PC-9 (cell line): ENCODE measurements at regions of chr11 and their contacts with region 1.

Region 1: DNA sequence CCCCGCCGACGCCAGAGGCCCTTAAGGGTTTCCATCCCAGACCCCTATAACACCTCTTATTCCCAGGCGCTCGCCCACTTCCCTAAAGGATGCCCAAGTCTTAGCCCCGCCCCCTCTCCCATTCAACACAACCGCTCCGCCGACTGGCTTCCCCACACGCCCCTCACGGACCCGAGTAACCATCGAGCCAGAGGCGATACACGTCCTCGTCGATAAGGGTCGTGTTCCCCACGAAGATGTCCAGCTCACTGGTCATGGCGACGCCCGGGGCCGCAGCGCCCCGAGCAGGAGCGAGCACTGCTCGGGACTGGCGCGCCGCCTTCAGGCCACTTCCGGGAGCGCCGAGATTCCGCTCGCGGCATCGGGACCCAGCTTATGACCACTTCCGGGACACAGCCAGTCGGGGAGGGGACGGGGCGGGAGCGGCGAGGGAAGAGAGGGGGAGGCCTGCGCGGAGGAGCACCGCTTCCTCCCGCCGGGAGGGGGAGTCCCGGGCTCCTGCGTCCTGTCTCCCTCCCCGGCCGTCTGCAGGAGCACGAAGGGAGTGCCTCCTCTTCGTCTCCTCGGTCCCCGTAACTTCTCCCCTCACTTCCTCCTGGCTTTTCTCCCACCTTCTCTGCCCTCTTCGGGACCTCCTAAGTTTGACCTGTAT is at the start of gene FIBP:
- DNase-seq: peak; percentile 92 to 97
- H3K4me3 ChIP-seq: peak within 1 kb of the TSS; percentile 80
- H3K27ac ChIP-seq: peak within 1 kb of the TSS; percentile 51
- H3K4me1 ChIP-seq: peaks cover 28% of the 10 kb centered on the region
- H3K27me3 ChIP-seq: no peaks in the 10 kb centered on the region
- CTCF ChIP-seq: peak; percentile 90
- total RNA-seq, gene FIBP: 105 and 141 TPM in 2 replicates

Region 2: GRCh38 chr11:65111744-65112414 is 776.4 kb before region 1 on chr11 and contains the start of gene TM7SF2:
- CTCF ChIA-PET with region 1: no interaction called
- POLR2A ChIA-PET with region 1: interaction called, 14 read pairs
- intact Hi-C with region 1: no loop called
- DNase-seq: peak; percentile 92 to 97
- H3K4me3 ChIP-seq: peak within 1 kb of the TSS; percentile 78
- H3K27ac ChIP-seq: no peak within 1 kb of the TSS
- H3K4me1 ChIP-seq: peaks cover 40% of the 10 kb centered on the region
- H3K27me3 ChIP-seq: no peaks in the 10 kb centered on the region
- CTCF ChIP-seq: no peak
- total RNA-seq, gene TM7SF2: 49.5 and 72.3 TPM in 2 replicates

Region 3: GRCh38 chr11:65711785-65712632 is 176.3 kb before region 1 on chr11 and contains the start of gene KAT5:
- CTCF ChIA-PET with region 1: interaction called, 11 read pairs
- POLR2A ChIA-PET with region 1: interaction called, 10 read pairs
- intact Hi-C with region 1: loop called (anchors 1 kb)
- DNase-seq: peak; percentile 96 to 99
- H3K4me3 ChIP-seq: peak within 1 kb of the TSS; percentile 86
- H3K27ac ChIP-seq: peak within 1 kb of the TSS; percentile 91
- H3K4me1 ChIP-seq: peaks cover 13% of the 10 kb centered on the region
- H3K27me3 ChIP-seq: no peaks in the 10 kb centered on the region
- CTCF ChIP-seq: peak; percentile 97
- total RNA-seq, gene KAT5: 49.6 and 57.1 TPM in 2 replicates

Region 4: GRCh38 chr11:65822776-65823528 is 65.3 kb before region 1 on chr11:
- CTCF ChIA-PET with region 1: no interaction called
- POLR2A ChIA-PET with region 1: no interaction called
- intact Hi-C with region 1: no loop called
- DNase-seq: no peak
- H3K4me3 ChIP-seq: no peak overlapping the region
- H3K27ac ChIP-seq: no peak overlapping the region
- H3K4me1 ChIP-seq: no peaks in the 10 kb centered on the region
- H3K27me3 ChIP-seq: no peaks in the 10 kb centered on the region
- CTCF ChIP-seq: no peak

Region 5: DNA sequence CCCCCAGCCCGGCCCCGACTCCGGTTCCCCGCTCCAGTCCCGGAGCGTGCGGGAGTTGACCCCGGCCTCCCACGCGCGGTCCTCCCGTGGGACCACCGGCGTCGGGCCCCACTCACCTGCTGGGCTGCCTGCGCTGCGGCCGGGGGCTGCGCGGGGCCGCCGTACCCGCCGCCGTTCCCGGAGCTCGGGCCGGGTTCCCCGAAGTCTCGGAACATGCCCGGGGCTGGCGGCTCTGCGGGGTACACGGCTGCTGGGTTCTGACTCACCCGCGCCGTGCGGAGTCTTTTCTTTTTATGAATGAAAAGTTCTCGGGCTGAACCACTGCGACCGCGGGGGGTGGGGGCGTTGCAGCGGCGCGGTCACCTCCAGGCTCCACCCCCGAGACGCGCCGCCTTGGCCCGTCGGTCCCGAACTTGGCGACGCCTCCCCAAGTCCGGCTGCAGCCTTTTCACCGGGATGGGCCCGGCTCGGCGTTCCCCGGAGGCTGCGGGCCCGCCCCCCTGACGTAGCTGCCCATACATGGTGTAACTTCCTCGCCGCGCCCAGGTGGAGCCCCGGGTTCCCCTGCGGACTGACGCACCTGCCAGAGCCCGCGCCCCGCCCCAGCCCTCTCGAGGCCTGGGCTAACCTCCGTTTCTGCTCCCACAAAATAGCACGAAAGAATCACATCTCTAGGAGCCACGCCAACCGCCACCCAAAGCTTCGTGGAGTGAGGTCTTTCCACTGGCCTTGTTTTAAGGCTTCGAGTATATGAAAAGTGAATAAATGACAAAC is 12.0 kb after region 1 on chr11 and contains the start of gene FOSL1:
- CTCF ChIA-PET with region 1: interaction called, 15 read pairs
- POLR2A ChIA-PET with region 1: interaction called, 8 read pairs
- intact Hi-C with region 1: no loop called
- DNase-seq: peak; percentile 97 to 100
- H3K4me3 ChIP-seq: peak within 1 kb of the TSS; percentile 96
- H3K27ac ChIP-seq: peak within 1 kb of the TSS; percentile 95
- H3K4me1 ChIP-seq: peaks cover 71% of the 10 kb centered on the region
- H3K27me3 ChIP-seq: no peaks in the 10 kb centered on the region
- CTCF ChIP-seq: no peak
- total RNA-seq, gene FOSL1: 58.8 and 69.9 TPM in 2 replicates

Region 6: DNA sequence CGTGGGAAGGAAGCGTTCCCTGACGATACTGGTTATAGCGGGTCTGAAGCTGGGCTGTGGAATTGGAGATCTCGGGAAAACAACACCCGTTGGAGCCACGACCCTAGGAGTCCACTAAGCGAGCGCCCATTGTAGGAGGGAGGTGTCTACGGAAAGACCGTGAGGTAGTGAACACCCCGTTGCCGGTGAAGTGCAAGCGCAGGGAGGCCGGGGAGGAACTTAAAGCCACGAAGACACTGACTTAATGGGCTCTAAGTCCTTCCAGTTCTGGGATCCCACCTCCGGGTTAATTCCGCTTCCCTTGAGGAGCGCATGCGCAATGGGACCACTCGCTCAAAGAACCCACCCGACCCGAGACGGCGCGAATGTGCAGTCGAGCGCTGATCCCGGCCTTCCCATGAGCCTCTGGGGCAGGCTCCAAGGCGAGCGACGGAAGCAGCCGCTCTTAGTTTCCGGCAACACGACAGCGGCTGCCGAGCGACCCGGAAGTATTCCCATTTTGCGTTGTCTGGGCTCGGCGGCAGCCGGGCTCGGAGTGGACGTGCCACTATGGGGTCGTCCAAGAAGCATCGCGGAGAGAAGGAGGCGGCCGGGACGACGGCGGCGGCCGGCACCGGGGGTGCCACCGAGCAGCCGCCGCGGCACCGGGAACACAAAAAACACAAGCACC is 73.1 kb after region 1 on chr11 and contains the start of gene SART1:
- CTCF ChIA-PET with region 1: interaction called, 11 read pairs
- POLR2A ChIA-PET with region 1: interaction called, 3 read pairs
- intact Hi-C with region 1: loop called (anchors 1 kb)
- DNase-seq: peak; percentile 94 to 97
- H3K4me3 ChIP-seq: peak within 1 kb of the TSS; percentile 71
- H3K27ac ChIP-seq: peak within 1 kb of the TSS; percentile 63
- H3K4me1 ChIP-seq: peaks cover 13% of the 10 kb centered on the region
- H3K27me3 ChIP-seq: no peaks in the 10 kb centered on the region
- CTCF ChIP-seq: no peak
- total RNA-seq, gene SART1: 74.6 and 78.8 TPM in 2 replicates

Region 7: DNA sequence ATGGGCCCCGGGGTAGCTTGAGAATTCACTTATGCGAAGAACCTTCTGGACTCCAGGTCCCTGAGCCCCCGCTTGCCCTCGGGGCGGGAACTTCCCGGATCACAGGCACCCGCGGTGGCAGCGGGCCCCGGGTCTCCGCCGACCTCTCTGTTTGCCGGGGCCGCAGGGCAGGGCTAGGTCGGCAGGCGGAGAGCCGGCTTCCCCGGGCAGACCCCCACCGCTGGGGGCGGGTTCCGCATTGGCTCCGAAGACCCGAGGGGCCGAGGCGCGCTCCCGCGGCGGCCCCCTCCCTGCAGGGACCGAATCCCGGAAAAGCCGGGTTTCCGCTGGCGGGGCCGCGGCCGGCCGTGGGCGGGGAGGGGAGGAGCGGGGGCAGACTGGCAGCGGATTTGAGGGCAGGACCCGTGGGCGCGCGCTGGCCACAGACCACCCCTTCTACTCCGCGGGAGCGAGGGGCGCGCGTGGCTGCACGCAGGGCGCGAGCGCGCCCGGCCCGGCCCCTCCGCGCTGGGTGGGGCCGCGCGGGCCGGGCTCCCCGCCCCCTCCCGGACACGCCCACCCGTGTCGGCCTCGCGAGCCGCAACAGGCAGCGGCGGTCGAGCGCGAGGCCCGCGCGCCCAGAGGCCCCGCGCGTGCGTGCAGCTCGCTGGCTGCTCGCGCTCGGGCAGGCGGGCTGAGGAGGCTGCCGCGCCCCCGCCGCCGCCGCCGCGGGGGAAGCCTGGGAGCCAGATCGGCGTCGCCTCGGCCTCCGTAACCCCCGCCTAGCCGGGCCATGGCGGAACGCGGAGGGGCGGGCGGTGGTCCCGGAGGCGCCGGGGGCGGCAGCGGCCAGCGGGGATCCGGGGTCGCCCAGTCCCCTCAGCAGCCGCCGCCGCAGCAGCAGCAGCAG is 181.7 kb after region 1 on chr11 and contains the start of gene PACS1:
- CTCF ChIA-PET with region 1: interaction called, 3 read pairs
- POLR2A ChIA-PET with region 1: no interaction called
- intact Hi-C with region 1: loop called (anchors 10 kb)
- DNase-seq: peak in 1 of 2 experiments; percentile 73
- H3K4me3 ChIP-seq: peak within 1 kb of the TSS; percentile 72
- H3K27ac ChIP-seq: no peak within 1 kb of the TSS
- H3K4me1 ChIP-seq: peaks cover 22% of the 10 kb centered on the region
- H3K27me3 ChIP-seq: no peaks in the 10 kb centered on the region
- CTCF ChIP-seq: no peak
- total RNA-seq, gene PACS1: 100 and 102 TPM in 2 replicates